PC-9 (cell line): ENCODE measurements at regions of chr10 and their contacts with region 1.

Region 1: DNA sequence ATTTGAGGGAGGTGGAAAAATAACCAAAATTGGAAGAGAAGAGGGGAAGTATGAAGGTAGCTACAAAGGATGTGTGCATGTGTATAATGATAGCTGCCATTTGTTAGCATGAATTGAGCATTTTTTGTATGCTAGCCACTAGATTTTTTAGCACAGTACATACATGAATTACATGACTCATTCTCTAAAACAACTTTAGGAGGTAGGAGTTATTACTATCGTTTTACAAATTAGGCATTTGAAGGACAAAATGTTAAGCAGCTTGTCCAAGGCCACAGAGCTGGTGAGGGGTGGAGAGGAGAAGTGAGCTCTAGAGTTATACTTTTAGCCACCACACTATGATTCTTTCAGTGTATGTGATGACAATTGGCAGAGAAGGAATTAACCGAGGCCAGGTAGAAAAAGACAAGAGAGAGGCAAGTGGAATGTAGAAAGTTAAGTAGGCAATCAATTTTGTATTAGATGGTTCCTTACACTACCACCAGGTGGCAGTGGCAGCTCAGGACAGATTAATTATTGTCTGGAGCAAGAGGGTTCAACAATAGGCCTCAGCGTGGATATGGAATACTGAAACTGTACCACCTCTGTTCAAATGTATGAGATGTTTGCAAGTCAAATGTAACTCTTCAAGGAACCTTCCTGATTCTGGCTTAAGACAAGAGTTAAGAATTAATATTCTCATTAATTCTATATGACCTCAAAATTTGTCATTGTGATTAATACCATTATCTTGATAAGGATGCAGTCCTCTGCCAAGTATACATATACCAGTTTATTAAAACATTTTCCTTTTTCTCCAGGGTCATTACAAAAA is 128.0 kb downstream of the MBL2 start:
- DNase-seq: peak in 1 of 2 experiments; percentile 35
- H3K4me3 ChIP-seq: no peak overlapping the region
- H3K27ac ChIP-seq: no peak overlapping the region
- H3K4me1 ChIP-seq: no peaks in the 10 kb centered on the region
- H3K27me3 ChIP-seq: no peaks in the 10 kb centered on the region
- CTCF ChIP-seq: peak; percentile 98

Region 2: DNA sequence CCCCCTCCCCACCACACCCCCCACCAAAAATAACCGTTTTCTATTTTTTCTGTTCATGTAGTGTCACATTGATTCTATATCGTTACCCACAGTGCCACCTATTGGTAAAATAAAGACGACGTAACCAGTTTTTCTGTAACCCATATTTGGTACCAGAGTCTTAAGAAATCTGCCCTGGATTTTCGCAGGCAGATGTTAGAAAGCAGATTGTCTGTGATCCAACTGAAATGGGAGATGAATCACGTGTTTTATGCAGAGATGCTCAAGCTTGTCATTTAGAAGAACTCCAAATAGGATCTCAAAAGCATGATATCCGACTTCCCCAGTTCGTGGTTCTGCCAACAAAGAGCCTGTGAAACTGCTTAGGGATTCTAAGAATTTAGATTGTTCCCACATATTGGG is 684.1 kb before region 1 on chr10:
- CTCF ChIA-PET with region 1: interaction called, 10 read pairs
- POLR2A ChIA-PET with region 1: no interaction called
- intact Hi-C with region 1: no loop called
- DNase-seq: no peak
- H3K4me3 ChIP-seq: no peak overlapping the region
- H3K27ac ChIP-seq: no peak overlapping the region
- H3K4me1 ChIP-seq: no peaks in the 10 kb centered on the region
- H3K27me3 ChIP-seq: no peaks in the 10 kb centered on the region
- CTCF ChIP-seq: peak; percentile 77

Region 3: GRCh38 chr10:52284416-52285013 is 360.1 kb before region 1 on chr10:
- CTCF ChIA-PET with region 1: no interaction called
- POLR2A ChIA-PET with region 1: no interaction called
- intact Hi-C with region 1: no loop called
- DNase-seq: no peak
- H3K4me3 ChIP-seq: no peak overlapping the region
- H3K27ac ChIP-seq: no peak overlapping the region
- H3K4me1 ChIP-seq: no peaks in the 10 kb centered on the region
- H3K27me3 ChIP-seq: no peaks in the 10 kb centered on the region
- CTCF ChIP-seq: no peak

Region 4: GRCh38 chr10:52308251-52309031 is 336.1 kb before region 1 on chr10:
- CTCF ChIA-PET with region 1: no interaction called
- POLR2A ChIA-PET with region 1: no interaction called
- intact Hi-C with region 1: loop called (anchors 2 kb)
- DNase-seq: peak in 1 of 2 experiments; percentile 64
- H3K4me3 ChIP-seq: no peak overlapping the region; the same call in 1 of the 2 replicates
- H3K27ac ChIP-seq: no peak overlapping the region
- H3K4me1 ChIP-seq: peaks cover 12% of the 10 kb centered on the region
- H3K27me3 ChIP-seq: no peaks in the 10 kb centered on the region
- CTCF ChIP-seq: peak; percentile 85

Region 5: GRCh38 chr10:52437205-52437646 is 207.4 kb before region 1 on chr10:
- CTCF ChIA-PET with region 1: no interaction called
- POLR2A ChIA-PET with region 1: no interaction called
- intact Hi-C with region 1: no loop called
- DNase-seq: no peak
- H3K4me3 ChIP-seq: no peak overlapping the region
- H3K27ac ChIP-seq: no peak overlapping the region
- H3K4me1 ChIP-seq: peaks cover 11% of the 10 kb centered on the region
- H3K27me3 ChIP-seq: no peaks in the 10 kb centered on the region
- CTCF ChIP-seq: no peak

Region 6: DNA sequence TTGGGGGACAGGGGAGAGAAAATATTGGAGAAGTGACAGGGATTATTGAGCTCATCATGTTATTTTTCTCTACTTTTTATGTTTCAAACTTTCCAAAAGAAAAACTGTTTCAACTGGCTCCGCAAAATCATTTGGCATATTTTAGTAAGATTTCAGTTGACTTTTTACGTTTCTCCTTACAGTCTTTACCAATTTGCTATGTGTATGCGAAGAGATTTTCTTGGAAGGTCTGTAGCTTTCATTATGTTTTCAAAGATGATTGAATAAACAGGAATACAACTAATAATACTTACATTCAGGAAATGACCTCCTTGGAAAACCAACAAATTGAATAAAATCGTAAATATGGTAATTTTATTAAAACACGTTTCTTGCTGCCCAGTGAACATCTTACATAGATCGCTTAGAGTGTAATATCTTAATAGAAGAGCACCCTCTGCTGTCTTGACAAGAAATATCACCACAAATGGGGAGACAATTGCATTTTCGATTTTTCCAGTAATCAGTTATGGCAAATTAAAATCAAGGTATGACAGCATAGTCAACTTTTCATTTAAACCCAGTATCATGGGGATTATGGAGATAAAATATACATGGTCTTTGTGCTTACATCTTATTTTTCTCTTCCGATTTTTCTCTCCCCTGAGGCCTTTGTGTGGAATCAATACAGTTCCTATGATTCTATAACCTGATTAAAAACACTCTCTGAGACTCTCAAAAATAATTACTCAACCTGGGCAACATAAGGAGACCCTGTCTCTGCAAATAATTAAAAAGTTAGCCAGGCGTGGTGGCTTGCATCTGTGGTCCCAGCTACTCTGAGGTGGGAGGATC is 84.9 kb after region 1 on chr10:
- CTCF ChIA-PET with region 1: no interaction called
- POLR2A ChIA-PET with region 1: no interaction called
- intact Hi-C with region 1: loop called (anchors 1 kb)
- DNase-seq: peak in 1 of 2 experiments; percentile 47
- H3K4me3 ChIP-seq: no peak overlapping the region
- H3K27ac ChIP-seq: no peak overlapping the region
- H3K4me1 ChIP-seq: no peaks in the 10 kb centered on the region
- H3K27me3 ChIP-seq: no peaks in the 10 kb centered on the region
- CTCF ChIP-seq: peak; percentile 89

Region 7: GRCh38 chr10:52779541-52780390 is 135.2 kb after region 1 on chr10:
- CTCF ChIA-PET with region 1: interaction called, 4 read pairs
- POLR2A ChIA-PET with region 1: no interaction called
- intact Hi-C with region 1: loop called (anchors 1 kb)
- DNase-seq: peak in 1 of 2 experiments; percentile 73
- H3K4me3 ChIP-seq: no peak overlapping the region
- H3K27ac ChIP-seq: no peak overlapping the region
- H3K4me1 ChIP-seq: no peaks in the 10 kb centered on the region
- H3K27me3 ChIP-seq: no peaks in the 10 kb centered on the region
- CTCF ChIP-seq: peak; percentile 99

Region 8: GRCh38 chr10:52814506-52814905 is 169.9 kb after region 1 on chr10:
- CTCF ChIA-PET with region 1: no interaction called
- POLR2A ChIA-PET with region 1: no interaction called
- intact Hi-C with region 1: no loop called
- DNase-seq: no peak
- H3K4me3 ChIP-seq: no peak overlapping the region
- H3K27ac ChIP-seq: no peak overlapping the region
- H3K4me1 ChIP-seq: no peaks in the 10 kb centered on the region
- H3K27me3 ChIP-seq: no peaks in the 10 kb centered on the region
- CTCF ChIP-seq: no peak

Region 9: GRCh38 chr10:53003094-53003493 is 358.5 kb after region 1 on chr10:
- CTCF ChIA-PET with region 1: no interaction called
- POLR2A ChIA-PET with region 1: no interaction called
- intact Hi-C with region 1: no loop called
- DNase-seq: no peak
- H3K4me3 ChIP-seq: no peak overlapping the region
- H3K27ac ChIP-seq: no peak overlapping the region
- H3K4me1 ChIP-seq: no peaks in the 10 kb centered on the region
- H3K27me3 ChIP-seq: no peaks in the 10 kb centered on the region
- CTCF ChIP-seq: no peak